OCI-LY7 (cell line): ENCODE measurements at regions of chr6 and their contacts with region 1.

Region 1: DNA sequence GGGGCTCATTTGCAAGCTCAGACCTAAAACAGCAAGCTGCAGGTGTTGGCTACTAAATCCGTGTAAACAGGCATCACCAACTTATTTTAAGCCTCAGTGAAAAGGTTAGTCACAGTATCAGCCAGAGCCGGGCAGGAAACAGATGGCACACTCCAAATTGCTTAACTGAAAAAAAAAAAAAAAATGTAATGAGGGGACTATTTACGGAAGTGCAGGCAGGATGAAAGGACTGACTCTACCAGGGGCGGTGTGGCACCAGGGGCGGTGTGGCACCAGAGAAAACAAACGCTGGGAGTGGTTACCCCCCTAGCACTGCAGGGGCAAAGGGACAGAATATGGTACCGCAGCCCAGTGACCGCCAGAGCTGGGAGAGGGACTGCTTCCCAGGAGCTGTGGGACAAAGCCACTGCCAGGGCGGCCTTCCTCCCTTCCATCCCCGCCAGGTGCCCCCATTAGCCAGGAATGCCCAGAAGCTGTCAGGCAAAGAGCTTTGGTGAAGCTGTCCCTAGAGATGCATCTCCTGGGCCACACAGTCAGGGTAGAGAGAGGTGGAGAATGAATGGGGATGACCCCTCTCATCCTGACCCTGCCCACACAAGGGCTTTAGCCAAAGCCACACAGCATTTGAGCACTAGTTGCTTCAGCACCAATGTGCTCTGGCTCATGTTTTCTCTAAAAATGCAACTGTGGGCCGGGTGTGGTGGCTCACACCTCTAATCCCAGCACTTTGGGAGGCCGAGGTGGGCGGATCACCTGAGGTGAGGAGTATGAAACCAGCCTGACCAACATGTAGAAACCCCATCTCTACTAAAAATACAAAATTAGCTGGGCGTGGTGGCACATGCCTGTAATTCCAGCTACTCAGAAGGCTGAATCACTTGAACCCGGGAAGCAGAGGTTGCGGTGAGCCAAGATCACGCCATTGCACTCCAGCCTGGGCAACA is 39.6 kb upstream of the GFOD1 start:
- DNase-seq: peak; percentile 98
- H3K4me3 ChIP-seq: peak overlapping the region; percentile 59
- H3K27ac ChIP-seq: peak overlapping the region; percentile 99
- H3K4me1 ChIP-seq: peaks cover 84% of the 10 kb centered on the region
- CTCF ChIP-seq: peak; percentile 55

Region 2: DNA sequence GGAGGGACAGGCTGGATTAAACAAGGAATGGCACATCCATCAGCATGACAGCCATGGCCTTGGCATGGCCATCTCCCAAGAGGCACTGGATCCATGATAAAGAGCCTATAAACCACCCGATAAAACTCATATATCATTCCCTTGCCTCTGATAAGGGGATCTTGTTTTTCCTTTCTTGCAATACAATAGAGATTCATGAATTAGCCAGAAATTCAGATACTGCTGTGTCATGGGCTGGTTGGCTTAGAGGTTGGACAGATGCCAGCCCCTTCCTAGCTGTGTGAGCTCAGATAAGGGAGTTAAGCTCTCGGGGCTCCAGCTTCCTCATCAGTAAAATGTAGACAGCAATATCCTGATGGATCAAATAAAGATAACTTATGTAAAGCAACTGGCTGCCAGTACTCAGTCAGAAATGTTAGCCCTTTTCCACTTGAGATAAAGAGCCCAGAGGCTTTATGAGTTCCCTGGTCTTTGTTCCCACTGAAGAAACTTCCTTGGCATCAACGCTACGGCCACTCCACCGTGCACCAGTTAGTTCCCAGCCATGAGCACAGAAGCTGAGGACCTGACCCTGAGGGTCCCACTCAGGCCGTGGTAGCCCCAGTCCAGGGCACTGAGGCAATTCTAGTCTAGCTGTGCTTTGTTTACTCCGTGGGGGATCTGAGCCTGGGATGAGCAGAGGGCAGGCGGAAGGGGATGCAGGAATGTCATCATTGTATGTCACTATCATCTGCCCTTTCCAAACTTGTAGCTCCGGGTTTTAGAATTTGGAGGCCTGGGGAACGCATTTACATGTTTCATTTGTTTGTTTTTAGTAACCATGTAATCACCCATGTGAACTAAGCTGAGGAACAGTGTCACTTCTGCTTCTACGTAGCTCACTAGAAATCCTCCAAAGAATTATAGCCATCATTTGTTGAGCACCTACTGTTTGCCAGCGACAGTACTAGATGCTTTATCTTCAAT is 131.4 kb before region 1 on chr6:
- CTCF ChIA-PET with region 1: no interaction called
- POLR2A ChIA-PET with region 1: no interaction called
- intact Hi-C with region 1: loop called (anchors 2 kb)
- DNase-seq: peak; percentile 32
- H3K4me3 ChIP-seq: peak overlapping the region; percentile 46
- H3K27ac ChIP-seq: no peak overlapping the region
- H3K4me1 ChIP-seq: peaks cover 73% of the 10 kb centered on the region
- CTCF ChIP-seq: no peak

Region 3: GRCh38 chr6:13413900-13414555 is 113.0 kb before region 1 on chr6:
- CTCF ChIA-PET with region 1: no interaction called
- POLR2A ChIA-PET with region 1: no interaction called
- intact Hi-C with region 1: no loop called
- DNase-seq: no peak
- H3K4me3 ChIP-seq: no peak overlapping the region
- H3K27ac ChIP-seq: no peak overlapping the region
- H3K4me1 ChIP-seq: no peaks in the 10 kb centered on the region
- CTCF ChIP-seq: no peak

Region 4: GRCh38 chr6:13511913-13512717 is 14.9 kb before region 1 on chr6:
- CTCF ChIA-PET with region 1: no interaction called
- POLR2A ChIA-PET with region 1: interaction called, 13 read pairs
- intact Hi-C with region 1: no loop called
- DNase-seq: no peak
- H3K4me3 ChIP-seq: no peak overlapping the region
- H3K27ac ChIP-seq: no peak overlapping the region
- H3K4me1 ChIP-seq: peaks cover 14% of the 10 kb centered on the region
- CTCF ChIP-seq: no peak

Region 5: DNA sequence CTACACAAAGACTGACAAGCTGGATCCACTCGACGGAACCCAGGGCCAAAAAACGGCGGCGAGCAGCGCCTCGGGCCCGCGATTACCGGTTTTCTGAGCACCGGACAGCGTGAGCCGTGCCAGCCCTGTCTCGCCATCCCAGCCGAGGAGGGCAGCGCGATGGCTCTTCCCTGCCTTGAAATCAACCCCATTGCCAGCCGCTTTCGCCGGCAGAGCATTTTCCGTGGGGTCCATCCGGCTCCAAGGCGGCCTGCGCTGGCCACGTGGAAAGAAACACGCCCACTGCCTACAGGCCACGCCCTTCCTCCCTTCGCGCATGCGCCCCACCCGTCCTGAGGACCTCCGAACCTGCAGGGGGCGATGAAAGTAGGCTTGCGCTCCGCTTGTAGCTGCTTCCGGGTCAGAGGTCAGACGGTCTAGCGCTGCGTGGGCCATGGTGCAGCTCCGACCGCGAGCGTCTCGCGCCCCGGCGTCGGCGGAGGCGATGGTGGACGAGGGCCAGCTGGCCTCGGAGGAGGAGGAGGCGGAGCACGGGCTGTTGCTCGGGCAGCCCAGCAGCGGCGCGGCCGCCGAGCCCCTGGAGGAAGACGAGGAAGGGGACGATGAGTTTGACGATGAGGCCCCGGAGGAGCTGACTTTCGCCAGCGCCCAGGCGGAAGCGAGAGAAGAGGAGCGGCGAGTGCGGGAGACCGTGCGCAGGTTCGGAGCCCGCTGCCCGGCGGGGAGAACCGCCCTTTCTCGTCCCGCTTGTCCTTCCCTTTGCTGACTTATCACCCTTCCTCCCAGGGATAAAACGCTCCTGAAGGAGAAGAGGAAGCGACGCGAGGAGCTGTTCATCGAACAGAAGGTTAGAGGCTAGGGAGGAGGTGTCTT is 88.2 kb after region 1 on chr6 and contains the start of gene NOL7:
- CTCF ChIA-PET with region 1: interaction called, 3 read pairs
- POLR2A ChIA-PET with region 1: interaction called, 6 read pairs
- intact Hi-C with region 1: loop called (anchors 1 kb)
- DNase-seq: peak; percentile 99
- H3K4me3 ChIP-seq: peak within 1 kb of the TSS; percentile 98
- H3K27ac ChIP-seq: peak within 1 kb of the TSS; percentile 73
- H3K4me1 ChIP-seq: peaks cover 54% of the 10 kb centered on the region
- CTCF ChIP-seq: peak; percentile 81
- total RNA-seq, gene NOL7: 67.5 and 92.4 TPM in 2 replicates

Region 6: GRCh38 chr6:14089224-14089623 is 562.2 kb after region 1 on chr6:
- CTCF ChIA-PET with region 1: no interaction called
- POLR2A ChIA-PET with region 1: no interaction called
- intact Hi-C with region 1: no loop called
- DNase-seq: no peak
- H3K4me3 ChIP-seq: no peak overlapping the region
- H3K27ac ChIP-seq: no peak overlapping the region
- H3K4me1 ChIP-seq: peaks cover 39% of the 10 kb centered on the region
- CTCF ChIP-seq: no peak